T-cell (primary cell): ENCODE measurements at regions of chr22 and their contacts with region 1.

Region 1: GRCh38 chr22:39532215-39533071 is at the start of gene RPS19BP1:
- DNase-seq: peak; percentile 97 to 100 (median 99)
- ATAC-seq: peak; percentile 84 to 87 (median 86)
- H3K4me3 ChIP-seq: peak within 1 kb of the TSS; percentile 89 to 92
- H3K4me3 Mint-ChIP-seq: peak within 1 kb of the TSS; percentile 92 to 97 (median 95)
- H3K27ac ChIP-seq: peak within 1 kb of the TSS; percentile 76
- H3K27ac Mint-ChIP-seq: peak within 1 kb of the TSS; percentile 94 to 97
- H3K4me1 ChIP-seq: peaks cover 27 to 65% of the 10 kb centered on the region in 2 experiments
- H3K4me1 Mint-ChIP-seq: peaks cover 52 to 58% (median 53%) of the 10 kb centered on the region in 3 donors
- H3K27me3 ChIP-seq: peaks cover 0 to 2% of the 10 kb centered on the region in 2 experiments
- H3K27me3 Mint-ChIP-seq: no peaks in the 10 kb centered on the region
- total RNA-seq, gene RPS19BP1: 42.4 to 76.8 (median 73.5) TPM

Region 2: GRCh38 chr22:39170825-39171622 is 361.4 kb before region 1 on chr22:
- CTCF ChIA-PET with region 1: interaction called in 1 of 2 experiments, 11 read pairs
- POLR2A ChIA-PET with region 1: no interaction called
- DNase-seq: peak; percentile 52 to 90 (median 75)
- ATAC-seq: peak; percentile 72 to 79 (median 76)
- H3K4me3 ChIP-seq: peak overlapping the region; percentile 10 to 36
- H3K4me3 Mint-ChIP-seq: peak overlapping the region; percentile 51 to 73 (median 72)
- H3K27ac ChIP-seq: peak overlapping the region; percentile 63
- H3K27ac Mint-ChIP-seq: peak overlapping the region; percentile 92 to 93
- H3K4me1 ChIP-seq: peaks cover 25 to 56% of the 10 kb centered on the region in 2 experiments
- H3K4me1 Mint-ChIP-seq: peaks cover 45 to 51% (median 50%) of the 10 kb centered on the region in 3 donors
- H3K27me3 ChIP-seq: peaks cover 0 to 9% of the 10 kb centered on the region in 2 experiments
- H3K27me3 Mint-ChIP-seq: peaks cover 0 to 2% of the 10 kb centered on the region in 2 donors

Region 3: DNA sequence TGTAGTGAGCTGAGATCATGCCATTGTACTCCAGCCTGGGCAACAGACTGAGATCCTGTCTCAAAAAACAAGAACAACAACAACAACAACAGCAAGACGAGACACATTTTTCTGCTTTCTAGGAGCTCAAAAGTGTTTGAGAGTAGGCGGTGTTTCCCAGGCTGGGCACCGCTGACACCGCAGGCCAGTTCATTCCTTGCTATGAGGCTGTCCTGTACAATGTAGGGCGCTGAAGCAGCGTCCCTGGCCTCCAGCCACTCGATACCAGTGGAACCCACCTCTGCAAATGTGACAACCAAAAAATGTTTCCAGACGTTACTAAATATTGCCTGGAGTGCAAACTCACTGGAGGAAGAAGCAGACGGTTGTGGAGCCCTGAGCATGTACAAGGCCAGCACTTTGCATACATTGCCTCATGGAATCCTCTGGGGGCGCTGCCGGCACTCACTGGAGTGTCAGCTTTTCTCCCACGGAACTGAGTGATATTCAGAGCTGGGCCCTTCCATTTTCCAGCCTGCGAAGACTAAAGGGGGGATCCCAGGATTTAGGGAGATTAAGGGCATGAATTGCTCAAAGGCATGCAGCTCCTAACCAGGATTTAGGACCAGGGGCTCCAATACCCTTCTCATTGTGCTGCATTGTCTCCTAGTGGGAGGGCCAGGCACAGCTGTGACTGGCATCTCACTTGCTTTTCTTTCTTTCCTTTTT is 36.2 kb before region 1 on chr22:
- CTCF ChIA-PET with region 1: interaction called, 17 to 27 read pairs
- POLR2A ChIA-PET with region 1: no interaction called
- DNase-seq: peak in 29 of 35 experiments; percentile 17 to 64 (median 40)
- ATAC-seq: peak; percentile 60 to 80 (median 72)
- H3K4me3 ChIP-seq: no peak overlapping the region
- H3K4me3 Mint-ChIP-seq: no peak overlapping the region
- H3K27ac ChIP-seq: no peak overlapping the region
- H3K27ac Mint-ChIP-seq: peak overlapping the region in 1 of 2 donors; percentile 31
- H3K4me1 ChIP-seq: peaks cover 0 to 6% of the 10 kb centered on the region in 2 experiments
- H3K4me1 Mint-ChIP-seq: peaks cover 8 to 22% (median 8%) of the 10 kb centered on the region in 3 donors
- H3K27me3 ChIP-seq: peaks cover 0 to 11% of the 10 kb centered on the region in 2 experiments
- H3K27me3 Mint-ChIP-seq: no peaks in the 10 kb centered on the region

Region 4: DNA sequence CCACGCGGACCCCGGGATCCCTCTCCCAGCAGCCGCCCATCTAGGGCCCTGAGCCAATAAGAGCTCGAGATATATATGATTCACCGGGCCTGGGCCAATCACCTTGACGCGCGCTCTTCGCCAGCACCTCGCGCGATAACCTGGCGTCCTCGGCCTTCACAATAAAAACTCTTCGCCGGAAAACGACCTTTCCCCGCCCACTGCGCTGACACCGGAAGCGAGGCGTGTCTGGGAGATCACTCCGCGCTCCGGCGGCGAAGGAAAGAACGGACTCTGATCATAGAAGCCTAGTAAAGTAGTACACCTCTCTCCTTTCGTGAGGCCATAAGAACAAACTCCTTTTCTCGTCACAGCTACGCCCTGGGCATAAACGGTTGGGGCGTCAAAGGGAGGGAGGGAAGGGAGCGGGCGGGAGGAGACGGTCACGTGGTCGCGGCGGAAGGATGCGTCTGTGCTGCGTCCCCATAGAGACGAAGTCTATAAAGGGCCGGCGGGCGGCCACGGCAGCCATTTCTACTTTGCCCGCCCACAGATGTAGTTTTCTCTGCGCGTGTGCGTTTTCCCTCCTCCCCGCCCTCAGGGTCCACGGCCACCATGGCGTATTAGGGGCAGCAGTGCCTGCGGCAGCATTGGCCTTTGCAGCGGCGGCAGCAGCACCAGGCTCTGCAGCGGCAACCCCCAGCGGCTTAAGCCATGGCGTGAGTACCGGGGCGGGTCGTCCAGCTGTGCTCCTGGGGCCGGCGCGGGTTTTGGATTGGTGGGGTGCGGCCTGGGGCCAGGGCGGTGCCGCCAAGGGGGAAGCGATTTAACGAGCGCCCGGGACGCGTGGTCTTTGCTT is 12.2 kb before region 1 on chr22 and contains the start of gene ATF4:
- CTCF ChIA-PET with region 1: interaction called in 1 of 2 experiments, 17 read pairs
- POLR2A ChIA-PET with region 1: interaction called, 11 to 19 read pairs
- DNase-seq: peak; percentile 93 to 99 (median 96)
- ATAC-seq: peak; percentile 90 to 92 (median 91)
- H3K4me3 ChIP-seq: peak within 1 kb of the TSS; percentile 89 to 99
- H3K4me3 Mint-ChIP-seq: peak within 1 kb of the TSS; percentile 85 to 95 (median 94)
- H3K27ac ChIP-seq: peak within 1 kb of the TSS; percentile 83
- H3K27ac Mint-ChIP-seq: peak within 1 kb of the TSS; percentile 96 to 98
- H3K4me1 ChIP-seq: peaks cover 24 to 53% of the 10 kb centered on the region in 2 experiments
- H3K4me1 Mint-ChIP-seq: peaks cover 40 to 52% (median 51%) of the 10 kb centered on the region in 3 donors
- H3K27me3 ChIP-seq: no peaks in the 10 kb centered on the region
- H3K27me3 Mint-ChIP-seq: peaks cover 0 to 2% of the 10 kb centered on the region in 2 donors
- total RNA-seq, gene ATF4: 236 to 371 (median 327) TPM

Region 5: GRCh38 chr22:40030758-40031095 is 498.3 kb after region 1 on chr22:
- CTCF ChIA-PET with region 1: interaction called, 4 to 13 read pairs
- POLR2A ChIA-PET with region 1: no interaction called
- DNase-seq: no peak
- ATAC-seq: peak in 2 of 4 experiments; percentile 26 to 44
- H3K4me3 ChIP-seq: no peak overlapping the region
- H3K4me3 Mint-ChIP-seq: no peak overlapping the region
- H3K27ac ChIP-seq: no peak overlapping the region
- H3K27ac Mint-ChIP-seq: no peak overlapping the region
- H3K4me1 ChIP-seq: peaks cover 0 to 9% of the 10 kb centered on the region in 2 experiments
- H3K4me1 Mint-ChIP-seq: peaks cover 4% of the 10 kb centered on the region in 3 donors
- H3K27me3 ChIP-seq: peaks cover 0 to 18% of the 10 kb centered on the region in 2 experiments
- H3K27me3 Mint-ChIP-seq: no peaks in the 10 kb centered on the region